Adrenal gland (tissue), 19 donors: ENCODE measurements at regions of chr18 and their contacts with region 1.

Region 1: GRCh38 chr18:14086458-14087231 is 45.6 kb downstream of the ZNF519 start:
- DNase-seq: peak in 5 of 7 donors; percentile 30 to 46 (median 36)
- H3K4me3 ChIP-seq: no peak overlapping the region
- H3K27ac ChIP-seq: no peak overlapping the region
- H3K4me1 ChIP-seq: no peaks in the 10 kb centered on the region
- H3K27me3 ChIP-seq: no peaks in the 10 kb centered on the region
- CTCF ChIP-seq: peak; percentile 42 to 98 (median 78)
- POLR2A ChIP-seq: no peak

Region 2: GRCh38 chr18:13823707-13824395 is 262.8 kb before region 1 on chr18 and contains the start of gene MC5R:
- intact Hi-C with region 1: loop called in 1 of 2 experiments (anchors 2 kb)
- DNase-seq: peak; percentile 35 to 73 (median 68)
- H3K4me3 ChIP-seq: peak within 1 kb of the TSS in 2 of 4 donors; percentile 26 to 54
- H3K27ac ChIP-seq: no peak within 1 kb of the TSS
- H3K4me1 ChIP-seq: no peaks in the 10 kb centered on the region
- H3K27me3 ChIP-seq: peaks cover 3% of the 10 kb centered on the region
- CTCF ChIP-seq: peak; percentile 67 to 97 (median 80)
- POLR2A ChIP-seq: no peak
- total RNA-seq, gene MC5R: 0.06 to 0.32 (median 0.20) TPM in 4 of 9 donors, not detected in the others

Region 3: DNA sequence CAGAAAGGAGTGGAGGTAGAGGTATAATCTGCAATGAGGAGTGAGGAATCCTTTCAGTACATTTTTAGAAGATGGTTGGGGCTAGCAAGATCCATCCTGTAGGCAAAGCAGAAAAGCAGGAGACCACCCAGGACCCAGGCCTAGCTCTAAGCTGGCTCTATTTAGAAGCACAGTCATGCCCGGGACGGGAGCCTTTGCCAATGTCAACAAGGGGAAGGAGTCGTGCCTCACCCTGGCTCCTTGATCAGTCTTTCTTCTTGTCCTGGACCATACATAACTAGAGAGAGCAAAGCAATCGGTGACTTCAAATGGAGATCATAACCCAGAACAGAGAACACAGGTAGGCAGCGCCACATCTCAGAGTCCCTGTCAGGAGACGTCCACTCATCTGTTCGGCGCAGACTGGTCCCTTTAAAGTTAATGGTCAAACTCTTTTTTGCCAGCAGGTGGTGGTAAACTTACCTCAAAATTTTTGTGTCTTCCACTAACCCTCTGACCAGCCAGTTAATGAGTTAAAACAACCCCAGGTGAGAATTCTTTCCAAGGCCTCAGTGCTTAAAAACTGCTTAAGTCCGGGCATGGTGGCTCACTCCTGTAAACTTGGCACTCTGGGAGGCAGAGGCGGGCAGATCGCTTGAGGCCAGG is 254.7 kb before region 1 on chr18:
- intact Hi-C with region 1: loop called in 1 of 2 experiments (anchors 5 kb)
- DNase-seq: peak in 1 of 7 donors; percentile 22
- H3K4me3 ChIP-seq: no peak overlapping the region
- H3K27ac ChIP-seq: no peak overlapping the region
- H3K4me1 ChIP-seq: no peaks in the 10 kb centered on the region
- H3K27me3 ChIP-seq: peaks cover 16% of the 10 kb centered on the region
- CTCF ChIP-seq: peak in 4 of 6 experiments; percentile 18 to 43 (median 33)
- POLR2A ChIP-seq: no peak